ENCODE measurements at regions of chr18 and their contacts with region 1.

Region 1: DNA sequence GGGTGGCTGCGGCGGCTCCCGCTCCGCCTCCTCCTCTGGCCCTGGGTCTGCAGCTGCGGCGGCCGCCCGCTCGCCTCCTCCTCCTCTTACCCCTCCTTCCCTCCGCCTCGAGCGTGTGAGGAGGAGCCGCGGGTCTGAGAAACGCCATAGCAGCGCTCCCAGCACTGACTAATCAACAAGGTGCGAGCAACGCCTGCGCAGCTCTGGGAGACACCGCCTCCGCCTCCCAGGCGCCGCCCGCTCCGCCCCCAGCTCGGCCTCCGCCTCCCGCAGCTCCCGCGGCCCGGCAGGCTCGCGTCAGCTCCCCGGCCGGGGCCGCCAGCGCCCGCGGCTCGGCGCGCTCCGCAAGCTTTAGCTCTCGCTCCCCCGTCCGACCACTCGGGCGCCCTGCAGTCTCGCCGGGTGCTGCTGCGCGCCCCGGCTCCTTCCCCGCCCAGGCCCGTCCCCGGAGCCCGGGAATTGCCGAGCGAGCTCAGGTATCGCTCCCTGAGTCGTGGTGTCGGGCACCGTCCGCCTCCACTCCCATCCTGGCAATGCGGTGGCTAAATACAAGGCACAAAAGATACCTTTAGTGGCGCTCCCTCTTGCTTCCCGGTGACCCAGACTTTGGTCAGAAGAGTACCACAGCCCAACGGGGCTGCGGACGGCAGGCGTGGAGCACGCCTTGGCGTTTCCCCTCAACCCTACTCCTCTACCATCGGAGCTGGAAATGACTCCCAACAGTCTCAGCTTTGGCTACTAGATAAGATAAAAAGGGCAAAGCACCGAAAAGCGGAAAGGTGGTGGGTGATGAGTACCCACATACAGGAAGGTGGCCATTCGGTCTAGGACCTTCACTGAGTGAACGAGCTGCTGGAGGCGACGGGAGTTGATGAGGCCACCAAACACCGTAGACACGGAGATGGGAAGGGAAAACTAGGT is at the start of gene GAREM1:
- DNase-seq: peak; percentile 86
- ATAC-seq: peak; percentile 98
- H3K4me3 Mint-ChIP-seq: peak within 1 kb of the TSS; percentile 60
- H3K27ac Mint-ChIP-seq: no peak within 1 kb of the TSS
- H3K4me1 Mint-ChIP-seq: peaks cover 19% of the 10 kb centered on the region
- H3K27me3 Mint-ChIP-seq: peaks cover 71% of the 10 kb centered on the region
- total RNA-seq, gene GAREM1: not detected

Region 2: GRCh38 chr18:32271672-32272208 is 199.2 kb before region 1 on chr18:
- CTCF ChIA-PET with region 1: interaction called, 13 read pairs
- DNase-seq: no peak
- ATAC-seq: peak; percentile 47
- H3K4me3 Mint-ChIP-seq: no peak overlapping the region
- H3K27ac Mint-ChIP-seq: no peak overlapping the region
- H3K4me1 Mint-ChIP-seq: no peaks in the 10 kb centered on the region
- H3K27me3 Mint-ChIP-seq: peaks cover 13% of the 10 kb centered on the region

Measured in activated CD8-positive, alpha-beta memory T cell treated with anti-CD3 and anti-CD28 coated beads, Interleukin-2, amount 10 ng/mL, durations not matched to agents 7 days and 5 days (primary cell).